ENCODE measurements at regions of chr3 and their contacts with region 1.

Region 1: DNA sequence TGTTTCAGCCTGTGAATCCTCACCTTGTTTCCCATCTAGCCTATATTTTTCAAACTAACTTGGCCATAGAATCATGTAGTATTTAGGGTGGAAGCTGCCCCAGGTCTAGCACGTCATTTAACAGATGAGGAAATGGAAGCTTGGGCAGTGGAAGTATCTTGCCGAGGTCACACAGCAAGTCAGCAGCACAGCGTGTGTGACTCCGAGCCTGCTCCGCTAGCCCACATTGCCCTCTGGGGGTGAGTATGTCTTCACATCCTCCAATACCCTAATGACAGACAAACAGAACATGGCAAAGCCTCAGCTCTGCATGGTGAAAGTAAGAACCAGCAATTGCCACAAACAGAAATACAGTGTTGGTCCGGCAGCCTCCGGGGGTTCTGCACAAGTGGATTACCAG is 2.2 kb upstream of the CCR5 start:
- DNase-seq: peak; percentile 70
- ATAC-seq: peak; percentile 89
- H3K4me3 ChIP-seq: no peak overlapping the region
- H3K27ac ChIP-seq: no peak overlapping the region
- H3K4me1 ChIP-seq: peaks cover 14% of the 10 kb centered on the region
- H3K27me3 ChIP-seq: no peaks in the 10 kb centered on the region
- CTCF ChIP-seq: peak; percentile 64 to 74 (median 72)
- EP300 ChIP-seq: no peak
- POLR2A ChIP-seq: no peak
- RAD21 ChIP-seq: peak; percentile 87

Region 2: DNA sequence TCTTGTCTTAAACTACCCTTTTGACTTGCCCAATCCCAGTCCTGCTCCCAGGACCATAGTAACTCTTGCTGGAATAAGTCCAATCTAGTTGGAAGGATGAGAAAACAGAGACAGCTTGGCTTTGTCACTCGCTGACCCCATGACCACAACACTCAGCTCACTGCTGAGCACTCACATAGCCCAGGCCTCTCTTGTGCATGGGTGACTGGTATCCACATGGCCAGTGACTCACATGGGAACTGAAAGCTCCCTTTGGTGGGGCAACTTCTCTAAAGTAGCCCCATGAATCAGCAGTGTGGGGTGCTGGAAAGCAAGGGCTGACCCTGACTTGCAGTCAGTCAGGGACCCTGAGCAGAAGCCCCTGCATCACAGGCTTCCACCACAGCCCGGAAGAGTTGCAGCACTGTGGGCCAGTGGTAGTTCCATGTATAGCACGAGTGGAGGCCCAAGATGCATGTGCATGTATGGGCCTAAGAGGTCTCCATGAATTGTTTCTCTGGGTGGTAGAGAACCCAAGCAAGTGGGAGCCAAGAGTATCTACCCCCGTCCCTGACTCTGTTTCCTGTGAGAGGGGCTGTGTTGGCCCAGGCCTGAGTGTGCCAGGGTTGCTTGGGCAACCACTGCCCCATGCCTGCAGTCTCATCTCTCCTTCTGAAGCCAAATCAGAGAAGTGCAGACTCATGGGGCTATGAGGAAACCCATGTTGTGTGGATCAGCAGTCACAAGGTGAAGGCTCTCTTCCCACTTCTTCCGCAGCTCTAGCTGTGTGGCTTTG is 279.1 kb before region 1 on chr3:
- CTCF ChIA-PET with region 1: interaction called, 714 read pairs
- POLR2A ChIA-PET with region 1: interaction called, 22 read pairs
- RAD21 ChIA-PET with region 1: interaction called, 396 read pairs
- SMC1A ChIA-PET with region 1: interaction called, 581 read pairs
- in situ Hi-C with region 1: loop called (anchors 5 kb)
- intact Hi-C with region 1: loop called (anchors 1 kb)
- DNase-seq: peak; percentile 78
- ATAC-seq: peak; percentile 90
- H3K4me3 ChIP-seq: no peak overlapping the region
- H3K27ac ChIP-seq: peak overlapping the region; percentile 20; the same call in 1 of the 2 replicates
- H3K4me1 ChIP-seq: peaks cover 58% of the 10 kb centered on the region
- H3K27me3 ChIP-seq: no peaks in the 10 kb centered on the region
- CTCF ChIP-seq: no peak
- EP300 ChIP-seq: peak; percentile 24 to 75; a peak in 2 of 4 replicates
- POLR2A ChIP-seq: no peak
- RAD21 ChIP-seq: 0 out of 2 replicates have a peak, but pooled peaks have one; percentile 5

Region 3: GRCh38 chr3:46208167-46208704 is 160.3 kb before region 1 on chr3 and contains the start of gene CCR1:
- CTCF ChIA-PET with region 1: interaction called, 555 read pairs
- POLR2A ChIA-PET with region 1: interaction called, 16 read pairs
- RAD21 ChIA-PET with region 1: interaction called, 421 read pairs
- SMC1A ChIA-PET with region 1: interaction called, 434 read pairs
- in situ Hi-C with region 1: loop called (anchors 5 kb)
- intact Hi-C with region 1: loop called (anchors 1 kb)
- DNase-seq: peak; percentile 92
- ATAC-seq: peak; percentile 86
- H3K4me3 ChIP-seq: peak within 1 kb of the TSS; percentile 28; the same call in 1 of the 2 replicates
- H3K27ac ChIP-seq: peak within 1 kb of the TSS; percentile 51
- H3K4me1 ChIP-seq: peaks cover 33% of the 10 kb centered on the region
- H3K27me3 ChIP-seq: no peaks in the 10 kb centered on the region
- CTCF ChIP-seq: peak; percentile 66 to 86 (median 75)
- EP300 ChIP-seq: peak; percentile 65 to 82; a peak in 3 of 4 replicates
- POLR2A ChIP-seq: no peak
- RAD21 ChIP-seq: peak; percentile 87
- polyA plus RNA-seq, gene CCR1: 3.4 to 3.7 TPM

Region 4: GRCh38 chr3:46228259-46229242 is 140.0 kb before region 1 on chr3:
- CTCF ChIA-PET with region 1: interaction called, 50 read pairs
- POLR2A ChIA-PET with region 1: no interaction called
- RAD21 ChIA-PET with region 1: interaction called, 421 read pairs
- SMC1A ChIA-PET with region 1: interaction called, 12 read pairs
- in situ Hi-C with region 1: no loop called
- intact Hi-C with region 1: no loop called
- DNase-seq: no peak
- ATAC-seq: no peak
- H3K4me3 ChIP-seq: no peak overlapping the region
- H3K27ac ChIP-seq: no peak overlapping the region
- H3K4me1 ChIP-seq: peaks cover 3% of the 10 kb centered on the region
- H3K27me3 ChIP-seq: peaks cover 0 to 3% of the 10 kb centered on the region in 2 experiments; a peak in 2 of 4 replicates
- CTCF ChIP-seq: no peak; a peak in 1 of 6 replicates
- EP300 ChIP-seq: no peak
- POLR2A ChIP-seq: no peak
- RAD21 ChIP-seq: peak; percentile 30; the same call in 1 of the 2 replicates

Region 5: DNA sequence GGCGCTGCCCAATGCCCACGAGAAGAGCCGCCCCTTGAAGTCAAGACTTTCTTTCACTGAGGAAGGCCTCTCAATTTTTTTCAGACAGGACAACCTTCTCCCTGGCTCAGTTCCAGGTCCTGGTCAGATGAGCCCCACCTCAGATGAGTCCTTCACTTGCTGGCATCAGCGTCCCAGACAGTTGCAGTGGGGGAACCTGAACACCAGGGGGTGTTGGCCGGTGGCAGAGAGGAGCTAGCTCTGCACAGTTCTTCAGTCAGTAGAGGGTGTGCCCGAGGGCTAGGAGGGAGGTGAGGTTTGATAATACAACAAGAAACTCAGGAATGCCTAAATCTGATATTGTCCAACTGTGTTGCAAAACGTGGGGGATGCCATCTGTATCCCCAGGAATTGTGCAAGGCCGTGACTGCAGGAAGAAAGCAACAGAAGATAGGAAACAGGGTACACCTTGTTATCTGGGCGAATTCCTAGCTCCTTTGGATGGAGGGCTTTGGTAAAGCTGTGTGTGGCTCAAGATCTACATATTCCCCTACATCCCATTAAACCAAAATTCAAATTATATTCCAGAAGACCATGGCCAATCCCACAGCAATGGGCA is 92.0 kb before region 1 on chr3:
- CTCF ChIA-PET with region 1: interaction called, 142 read pairs
- POLR2A ChIA-PET with region 1: interaction called, 6 read pairs
- RAD21 ChIA-PET with region 1: interaction called, 87 read pairs
- SMC1A ChIA-PET with region 1: interaction called, 137 read pairs
- in situ Hi-C with region 1: no loop called
- intact Hi-C with region 1: loop called (anchors 1 kb)
- DNase-seq: no peak
- ATAC-seq: peak; percentile 90
- H3K4me3 ChIP-seq: no peak overlapping the region
- H3K27ac ChIP-seq: no peak overlapping the region
- H3K4me1 ChIP-seq: peaks cover 27% of the 10 kb centered on the region
- H3K27me3 ChIP-seq: 0 out of 4 replicates have a peak, but pooled peaks cover 0 to 2% of the 10 kb centered on the region in 2 experiments
- CTCF ChIP-seq: peak; percentile 67 to 87 (median 85)
- EP300 ChIP-seq: no peak
- POLR2A ChIP-seq: no peak
- RAD21 ChIP-seq: peak; percentile 83

Region 6: DNA sequence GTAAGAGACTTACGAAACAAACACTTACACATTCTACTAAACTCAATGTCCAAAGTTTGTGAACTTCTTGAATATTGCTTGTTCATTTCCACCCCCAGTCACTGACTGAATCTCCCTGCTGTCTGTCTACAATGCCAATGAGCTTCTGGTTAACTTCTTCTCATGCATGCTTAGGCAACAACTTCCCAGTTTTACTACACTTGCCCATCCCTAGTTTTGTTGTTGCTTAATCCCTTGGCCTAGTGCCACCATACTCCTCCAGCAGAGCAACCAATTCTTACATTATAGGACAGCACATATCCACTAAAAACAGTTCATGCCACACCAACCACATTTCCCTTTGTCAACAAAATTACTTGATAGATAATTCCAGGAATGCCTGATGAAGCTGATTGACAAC is 55.6 kb before region 1 on chr3:
- CTCF ChIA-PET with region 1: interaction called, 10 read pairs
- POLR2A ChIA-PET with region 1: no interaction called
- RAD21 ChIA-PET with region 1: interaction called, 4 read pairs
- SMC1A ChIA-PET with region 1: interaction called, 6 read pairs
- in situ Hi-C with region 1: no loop called
- intact Hi-C with region 1: no loop called
- DNase-seq: no peak
- ATAC-seq: no peak
- H3K4me3 ChIP-seq: no peak overlapping the region
- H3K27ac ChIP-seq: no peak overlapping the region
- H3K4me1 ChIP-seq: peaks cover 5% of the 10 kb centered on the region; the same call in 1 of the 2 replicates
- H3K27me3 ChIP-seq: no peaks in the 10 kb centered on the region; a peak in 1 of 4 replicates
- CTCF ChIP-seq: no peak
- EP300 ChIP-seq: no peak
- POLR2A ChIP-seq: no peak
- RAD21 ChIP-seq: no peak

Region 7: DNA sequence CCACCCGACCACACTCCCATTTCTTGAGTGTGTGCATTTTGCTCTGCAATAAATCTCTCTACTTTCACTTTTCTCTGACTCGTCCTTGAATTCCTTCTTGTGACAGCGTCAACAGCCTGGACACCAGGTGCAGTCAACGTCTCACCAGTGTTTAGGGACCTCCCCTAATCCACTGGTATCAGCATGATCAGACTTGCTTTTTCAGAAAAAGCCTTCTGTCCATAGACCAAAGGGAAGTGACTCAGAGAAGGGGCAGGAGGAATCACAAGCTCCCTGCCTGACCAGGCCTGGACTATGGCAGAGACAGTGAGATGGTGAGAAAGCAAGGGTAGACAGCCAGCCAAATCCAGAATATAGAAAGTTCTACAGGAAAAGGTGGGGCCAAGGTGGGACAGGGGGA is 17.6 kb after region 1 on chr3:
- CTCF ChIA-PET with region 1: interaction called, 39 read pairs
- POLR2A ChIA-PET with region 1: no interaction called
- RAD21 ChIA-PET with region 1: interaction called, 18 read pairs
- SMC1A ChIA-PET with region 1: interaction called, 62 read pairs
- in situ Hi-C with region 1: no loop called
- intact Hi-C with region 1: no loop called
- DNase-seq: no peak
- ATAC-seq: peak; percentile 30; the same call in 2 of the 3 replicates
- H3K4me3 ChIP-seq: no peak overlapping the region
- H3K27ac ChIP-seq: no peak overlapping the region
- H3K4me1 ChIP-seq: peaks cover 14% of the 10 kb centered on the region
- H3K27me3 ChIP-seq: no peaks in the 10 kb centered on the region
- CTCF ChIP-seq: no peak
- EP300 ChIP-seq: no peak
- POLR2A ChIP-seq: no peak
- RAD21 ChIP-seq: no peak